ENCODE measurements at regions of chr17 and their contacts with region 1.

Region 1: DNA sequence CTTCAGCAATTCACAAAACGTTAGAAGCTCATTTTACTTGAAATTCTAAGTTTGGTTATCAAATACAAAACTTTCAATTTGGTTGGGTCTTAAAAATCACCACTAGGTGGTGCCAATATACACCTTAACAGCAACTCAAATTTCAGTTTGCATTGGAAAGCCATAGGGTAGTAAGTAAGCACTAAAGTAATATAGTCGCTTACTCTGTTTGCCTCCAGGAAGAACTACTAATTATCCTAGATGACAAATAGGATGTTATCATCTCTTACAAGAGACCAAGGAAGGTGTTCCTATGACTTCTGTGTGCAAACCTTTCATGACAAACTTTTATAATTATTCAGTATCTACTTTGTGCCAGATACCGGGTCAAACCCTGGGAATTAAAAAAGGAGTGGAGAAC is 93.3 kb downstream of the MYO1D start:
- DNase-seq: no peak
- ATAC-seq: peak in 2 of 8 donors; percentile 29 to 64
- H3K4me3 ChIP-seq: no peak overlapping the region
- H3K27ac ChIP-seq: no peak overlapping the region
- H3K4me1 ChIP-seq: no peaks in the 10 kb centered on the region
- H3K27me3 ChIP-seq: no peaks in the 10 kb centered on the region
- CTCF ChIP-seq: peak; percentile 72 to 88 (median 81)

Region 2: GRCh38 chr17:32819035-32819434 is 35.4 kb after region 1 on chr17:
- intact Hi-C with region 1: loop called in 1 of 10 experiments (anchors 5 kb)
- DNase-seq: no peak
- ATAC-seq: peak in 7 of 8 donors; percentile 12 to 76 (median 66)
- H3K4me3 ChIP-seq: peak overlapping the region in 1 of 10 donors; percentile 5
- H3K27ac ChIP-seq: peak overlapping the region in 7 of 10 donors; percentile 25 to 70 (median 43)
- H3K4me1 ChIP-seq: peaks cover 0 to 31% (median 19%) of the 10 kb centered on the region in 9 donors
- H3K27me3 ChIP-seq: peaks cover 0 to 12% (median 0%) of the 10 kb centered on the region in 7 donors
- CTCF ChIP-seq: no peak

Region 3: GRCh38 chr17:32877164-32877764 is 93.7 kb after region 1 on chr17:
- intact Hi-C with region 1: loop called (anchors 1 to 5 kb)
- DNase-seq: peak; percentile 84 to 93
- ATAC-seq: peak; percentile 98 to 100 (median 99)
- H3K4me3 ChIP-seq: peak overlapping the region in 9 of 10 donors; percentile 74 to 97 (median 85)
- H3K27ac ChIP-seq: peak overlapping the region; percentile 64 to 91 (median 84)
- H3K4me1 ChIP-seq: peaks cover 0 to 32% (median 16%) of the 10 kb centered on the region in 9 donors
- H3K27me3 ChIP-seq: peaks cover 0 to 13% (median 0%) of the 10 kb centered on the region in 7 donors
- CTCF ChIP-seq: peak; percentile 74 to 96 (median 85)

Region 4: DNA sequence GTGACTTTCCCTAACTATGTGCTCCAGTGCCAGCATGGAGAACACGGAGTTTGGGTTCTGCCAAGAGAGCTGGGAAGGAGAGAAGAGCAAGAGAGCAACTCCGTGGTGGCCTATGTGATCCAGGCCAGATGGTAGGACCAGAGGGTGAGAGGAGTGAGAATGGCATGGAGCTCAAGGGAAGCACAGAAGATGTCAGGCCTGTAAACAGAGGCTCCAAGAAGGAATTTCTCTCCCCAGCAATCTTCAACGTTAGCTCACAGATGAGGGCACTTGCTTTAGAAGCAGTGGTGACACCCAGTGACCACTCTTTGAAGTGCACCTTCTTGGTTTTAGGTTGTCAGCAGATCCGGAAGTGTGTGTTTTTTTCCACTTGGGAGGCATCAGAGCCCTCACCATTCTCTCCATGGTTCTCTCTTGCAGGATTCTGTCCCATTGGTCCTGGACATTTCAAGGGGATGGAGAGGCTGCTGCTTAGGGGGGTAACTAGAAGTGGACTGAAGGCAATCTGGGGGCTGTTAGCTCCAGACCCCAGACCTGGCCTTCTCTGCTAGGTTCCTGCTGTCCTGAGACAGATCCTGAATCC is 126.3 kb after region 1 on chr17:
- intact Hi-C with region 1: loop called (anchors 1 to 10 kb)
- DNase-seq: peak in 1 of 2 donors; percentile 78
- ATAC-seq: peak; percentile 54 to 86 (median 79)
- H3K4me3 ChIP-seq: no peak overlapping the region
- H3K27ac ChIP-seq: no peak overlapping the region
- H3K4me1 ChIP-seq: peaks cover 0 to 5% (median 0%) of the 10 kb centered on the region in 9 donors
- H3K27me3 ChIP-seq: peaks cover 0 to under 1% (median 0%) of the 10 kb centered on the region in 7 donors
- CTCF ChIP-seq: peak; percentile 47 to 84 (median 76)

Region 5: GRCh38 chr17:32976131-32976530 is 192.5 kb after region 1 on chr17:
- intact Hi-C with region 1: no loop called
- DNase-seq: no peak
- ATAC-seq: no peak
- H3K4me3 ChIP-seq: no peak overlapping the region
- H3K27ac ChIP-seq: no peak overlapping the region
- H3K4me1 ChIP-seq: no peaks in the 10 kb centered on the region
- H3K27me3 ChIP-seq: peaks cover 0 to 3% (median 0%) of the 10 kb centered on the region in 7 donors
- CTCF ChIP-seq: no peak

Region 6: DNA sequence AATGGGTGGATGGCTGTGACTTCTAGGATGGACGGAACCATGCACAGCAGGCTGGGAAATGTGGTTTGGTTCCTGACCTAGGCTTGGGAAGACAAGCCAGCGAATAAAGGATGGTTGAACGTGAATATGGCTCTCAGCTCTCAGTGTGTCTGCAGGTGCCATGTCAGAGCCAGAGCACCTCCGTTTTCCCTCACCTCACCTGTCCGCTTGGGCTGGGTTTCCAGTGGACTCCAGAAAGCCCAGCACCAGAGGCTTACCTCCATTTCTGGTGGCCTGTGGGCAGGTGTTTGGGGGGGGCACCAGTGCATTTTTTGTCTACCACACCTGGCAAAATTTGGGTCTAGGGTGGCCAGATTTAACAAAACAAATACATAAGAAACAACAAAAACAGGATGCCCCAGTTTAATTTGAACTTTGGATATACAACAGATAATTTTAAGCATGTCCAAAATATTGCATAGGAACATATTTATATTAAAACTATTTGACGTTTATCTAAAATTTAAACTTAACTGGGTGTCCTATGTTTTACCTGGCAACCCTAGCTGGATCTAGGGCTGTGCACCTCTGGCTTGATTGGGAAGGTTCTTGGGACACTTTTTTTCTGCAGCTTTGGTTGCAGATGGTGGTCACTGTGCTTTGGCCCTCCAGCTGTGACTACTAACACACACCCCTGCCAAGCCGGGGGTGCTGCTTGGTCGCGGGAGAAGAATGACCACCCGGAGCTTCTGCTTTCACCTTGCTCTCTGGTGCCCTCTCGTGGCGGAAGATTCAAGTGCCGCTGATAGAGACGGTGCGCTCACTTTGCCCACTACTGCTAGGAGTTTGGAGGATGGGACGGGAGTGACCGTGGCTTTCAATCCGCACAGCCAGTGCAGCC is 214.4 kb after region 1 on chr17:
- intact Hi-C with region 1: loop called in 8 of 10 experiments (anchors 5 to 10 kb)
- DNase-seq: peak; percentile 68 to 73
- ATAC-seq: peak in 7 of 8 donors; percentile 38 to 74 (median 62)
- H3K4me3 ChIP-seq: no peak overlapping the region
- H3K27ac ChIP-seq: no peak overlapping the region
- H3K4me1 ChIP-seq: peaks cover 0 to 7% (median 0%) of the 10 kb centered on the region in 9 donors
- H3K27me3 ChIP-seq: peaks cover 0 to 37% (median 17%) of the 10 kb centered on the region in 7 donors
- CTCF ChIP-seq: peak; percentile 70 to 94 (median 89)

Region 7: GRCh38 chr17:33009636-33010035 is 226.0 kb after region 1 on chr17:
- intact Hi-C with region 1: loop called in 1 of 10 experiments (anchors 10 kb)
- DNase-seq: no peak
- ATAC-seq: no peak
- H3K4me3 ChIP-seq: no peak overlapping the region
- H3K27ac ChIP-seq: no peak overlapping the region
- H3K4me1 ChIP-seq: no peaks in the 10 kb centered on the region
- H3K27me3 ChIP-seq: peaks cover 0 to 33% (median 6%) of the 10 kb centered on the region in 7 donors
- CTCF ChIP-seq: no peak

Region 8: GRCh38 chr17:33750943-33751701 is 967.5 kb after region 1 on chr17:
- intact Hi-C with region 1: loop called in 2 of 10 experiments (anchors 5 to 10 kb)
- DNase-seq: peak; percentile 32 to 58
- ATAC-seq: peak in 6 of 8 donors; percentile 54 to 84 (median 70)
- H3K4me3 ChIP-seq: peak overlapping the region in 4 of 10 donors; percentile 14 to 27 (median 20)
- H3K27ac ChIP-seq: no peak overlapping the region
- H3K4me1 ChIP-seq: peaks cover 0 to 8% (median 0%) of the 10 kb centered on the region in 9 donors
- H3K27me3 ChIP-seq: peaks cover 0 to 79% (median 35%) of the 10 kb centered on the region in 7 donors
- CTCF ChIP-seq: peak; percentile 85 to 97 (median 93)